ENCODE measurements at regions of chr6 and their contacts with region 1.

Region 1: DNA sequence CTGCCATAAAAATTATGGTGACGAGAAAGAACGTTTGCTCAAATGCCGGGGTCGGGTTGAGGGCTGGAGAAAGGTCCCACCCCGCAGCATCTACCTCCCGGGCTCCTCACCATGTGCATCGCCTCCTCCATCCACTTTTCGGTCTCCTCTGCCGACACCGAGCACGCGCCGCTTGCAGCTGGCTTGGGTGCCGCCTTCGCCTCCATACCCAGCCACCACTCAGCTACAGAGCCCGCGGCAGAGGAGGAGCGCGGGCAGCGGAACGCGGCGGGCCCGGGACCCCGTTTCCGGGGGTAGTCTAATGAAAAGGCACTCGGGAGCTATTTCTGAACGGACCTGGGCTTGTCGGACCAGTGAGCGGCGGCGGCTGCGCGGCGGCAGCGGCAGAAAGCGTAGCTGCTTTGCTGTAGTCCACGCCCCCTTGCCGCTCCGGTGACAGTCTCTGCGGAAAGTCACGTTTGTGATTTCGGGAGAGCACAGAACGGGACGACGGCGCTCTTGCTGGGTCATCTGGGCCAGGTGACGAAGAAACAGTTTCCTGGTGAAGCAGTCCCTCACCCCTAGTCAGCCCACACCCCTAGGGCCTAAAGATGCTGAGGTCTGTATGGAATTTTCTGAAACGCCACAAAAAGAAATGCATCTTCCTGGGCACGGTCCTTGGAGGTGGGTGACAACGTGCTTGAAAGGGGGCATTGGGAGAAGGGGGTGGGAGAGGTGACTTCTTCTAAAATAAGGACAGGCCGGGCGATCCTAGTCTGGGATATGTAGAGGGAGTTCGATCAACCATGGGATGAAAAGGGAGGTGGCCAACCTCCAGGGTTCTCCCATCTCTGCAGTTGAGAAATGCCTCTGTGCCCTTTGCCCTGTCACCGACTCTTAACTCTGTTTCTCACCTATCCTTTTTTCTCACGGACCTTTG is at the starts of genes ADAT2 and PEX3:
- DNase-seq: peak; percentile 76
- ATAC-seq: peak; percentile 96
- H3K4me3 ChIP-seq: peak within 1 kb of the TSS; percentile 79
- H3K27ac ChIP-seq: peak within 1 kb of the TSS; percentile 88
- H3K4me1 ChIP-seq: no peaks in the 10 kb centered on the region; the same call in 1 of the 2 replicates
- H3K27me3 ChIP-seq: no peaks in the 10 kb centered on the region
- CTCF ChIP-seq: no peak
- EP300 ChIP-seq: no peak
- POLR2A ChIP-seq: peak; percentile 95
- RAD21 ChIP-seq: 0 out of 2 replicates have a peak, but pooled peaks have one; percentile 21
- polyA plus RNA-seq, gene ADAT2: 7.8 to 9.0 TPM
- polyA plus RNA-seq, gene PEX3: 50.8 to 70.0 TPM

Region 2: GRCh38 chr6:142796571-142796970 is 654.1 kb before region 1 on chr6:
- CTCF ChIA-PET with region 1: no interaction called
- POLR2A ChIA-PET with region 1: interaction called, 11 read pairs
- RAD21 ChIA-PET with region 1: no interaction called
- SMC1A ChIA-PET with region 1: no interaction called
- in situ Hi-C with region 1: no loop called
- intact Hi-C with region 1: no loop called
- DNase-seq: no peak
- ATAC-seq: no peak
- H3K4me3 ChIP-seq: no peak overlapping the region
- H3K27ac ChIP-seq: no peak overlapping the region
- H3K4me1 ChIP-seq: peaks cover 17% of the 10 kb centered on the region
- H3K27me3 ChIP-seq: no peaks in the 10 kb centered on the region
- CTCF ChIP-seq: no peak
- EP300 ChIP-seq: no peak
- POLR2A ChIP-seq: no peak
- RAD21 ChIP-seq: no peak

Region 3: DNA sequence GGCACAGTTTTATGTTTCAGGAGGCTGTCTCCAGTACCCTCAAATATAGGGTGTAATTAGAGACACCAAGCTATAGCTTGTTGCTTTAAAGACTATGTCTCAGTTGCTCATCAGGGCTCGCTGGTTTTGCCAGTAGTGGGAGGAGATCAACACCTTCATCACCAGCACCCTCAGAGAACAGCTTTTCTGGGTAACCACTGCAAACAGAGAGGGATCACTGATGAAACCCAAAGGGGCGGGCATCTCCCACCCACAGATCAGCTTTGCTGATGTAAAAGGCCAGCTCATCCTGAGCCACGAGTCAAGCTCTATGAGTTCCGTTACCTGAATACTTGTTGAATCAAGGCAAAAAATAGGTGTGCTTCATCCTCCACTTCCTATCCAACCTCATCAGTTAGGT is 202.4 kb before region 1 on chr6:
- CTCF ChIA-PET with region 1: no interaction called
- POLR2A ChIA-PET with region 1: no interaction called
- RAD21 ChIA-PET with region 1: no interaction called
- SMC1A ChIA-PET with region 1: no interaction called
- in situ Hi-C with region 1: no loop called
- intact Hi-C with region 1: no loop called
- DNase-seq: no peak
- ATAC-seq: no peak
- H3K4me3 ChIP-seq: no peak overlapping the region
- H3K27ac ChIP-seq: no peak overlapping the region
- H3K4me1 ChIP-seq: no peaks in the 10 kb centered on the region
- H3K27me3 ChIP-seq: no peaks in the 10 kb centered on the region
- CTCF ChIP-seq: no peak
- EP300 ChIP-seq: no peak
- POLR2A ChIP-seq: no peak
- RAD21 ChIP-seq: no peak

Region 4: GRCh38 chr6:143286251-143286795 is 164.4 kb before region 1 on chr6:
- CTCF ChIA-PET with region 1: no interaction called
- POLR2A ChIA-PET with region 1: no interaction called
- RAD21 ChIA-PET with region 1: no interaction called
- SMC1A ChIA-PET with region 1: no interaction called
- in situ Hi-C with region 1: no loop called
- intact Hi-C with region 1: no loop called
- DNase-seq: no peak
- ATAC-seq: no peak
- H3K4me3 ChIP-seq: no peak overlapping the region
- H3K27ac ChIP-seq: no peak overlapping the region
- H3K4me1 ChIP-seq: no peaks in the 10 kb centered on the region
- H3K27me3 ChIP-seq: no peaks in the 10 kb centered on the region; a peak in 1 of 4 replicates
- CTCF ChIP-seq: no peak
- EP300 ChIP-seq: no peak
- POLR2A ChIP-seq: no peak
- RAD21 ChIP-seq: no peak

Region 5: DNA sequence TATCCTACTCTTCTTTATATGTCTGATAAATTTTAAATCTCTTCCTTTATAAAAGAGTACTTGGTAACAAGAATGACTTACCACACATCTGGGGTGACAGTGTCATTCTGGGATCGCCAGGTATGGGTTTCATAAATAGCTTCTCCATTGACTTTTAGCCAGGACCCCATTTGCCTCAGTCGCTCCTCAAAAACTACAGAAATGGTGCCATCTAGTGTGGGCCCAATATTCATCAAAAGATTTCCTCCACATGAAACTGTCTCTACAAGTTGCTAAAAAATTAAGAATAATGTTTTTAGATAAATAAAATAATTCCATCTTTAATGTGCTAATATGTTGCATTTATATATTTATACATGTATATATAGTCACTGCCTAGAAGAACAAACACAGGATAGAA is 51.1 kb after region 1 on chr6:
- CTCF ChIA-PET with region 1: interaction called, 4 read pairs
- POLR2A ChIA-PET with region 1: no interaction called
- RAD21 ChIA-PET with region 1: interaction called, 4 read pairs
- SMC1A ChIA-PET with region 1: interaction called, 4 read pairs
- in situ Hi-C with region 1: no loop called
- intact Hi-C with region 1: loop called (anchors 1 kb)
- DNase-seq: no peak
- ATAC-seq: no peak
- H3K4me3 ChIP-seq: no peak overlapping the region
- H3K27ac ChIP-seq: no peak overlapping the region
- H3K4me1 ChIP-seq: peaks cover 12% of the 10 kb centered on the region
- H3K27me3 ChIP-seq: no peaks in the 10 kb centered on the region
- CTCF ChIP-seq: no peak
- EP300 ChIP-seq: no peak
- POLR2A ChIP-seq: no peak
- RAD21 ChIP-seq: no peak

Region 6: GRCh38 chr6:143569040-143569439 is 118.3 kb after region 1 on chr6:
- CTCF ChIA-PET with region 1: interaction called, 3 read pairs
- POLR2A ChIA-PET with region 1: no interaction called
- RAD21 ChIA-PET with region 1: no interaction called
- SMC1A ChIA-PET with region 1: no interaction called
- in situ Hi-C with region 1: no loop called
- intact Hi-C with region 1: loop called (anchors 1 kb)
- DNase-seq: no peak
- ATAC-seq: no peak
- H3K4me3 ChIP-seq: no peak overlapping the region
- H3K27ac ChIP-seq: no peak overlapping the region
- H3K4me1 ChIP-seq: peaks cover 4% of the 10 kb centered on the region
- H3K27me3 ChIP-seq: no peaks in the 10 kb centered on the region; a peak in 2 of 4 replicates
- CTCF ChIP-seq: no peak
- EP300 ChIP-seq: no peak
- POLR2A ChIP-seq: no peak
- RAD21 ChIP-seq: no peak

Region 7: GRCh38 chr6:143772116-143773086 is 321.7 kb after region 1 on chr6:
- CTCF ChIA-PET with region 1: no interaction called
- POLR2A ChIA-PET with region 1: no interaction called
- RAD21 ChIA-PET with region 1: no interaction called
- SMC1A ChIA-PET with region 1: no interaction called
- in situ Hi-C with region 1: no loop called
- intact Hi-C with region 1: no loop called
- DNase-seq: no peak
- ATAC-seq: no peak
- H3K4me3 ChIP-seq: no peak overlapping the region
- H3K27ac ChIP-seq: no peak overlapping the region
- H3K4me1 ChIP-seq: no peaks in the 10 kb centered on the region
- H3K27me3 ChIP-seq: no peaks in the 10 kb centered on the region
- CTCF ChIP-seq: no peak
- EP300 ChIP-seq: no peak
- POLR2A ChIP-seq: no peak
- RAD21 ChIP-seq: no peak

Region 8: DNA sequence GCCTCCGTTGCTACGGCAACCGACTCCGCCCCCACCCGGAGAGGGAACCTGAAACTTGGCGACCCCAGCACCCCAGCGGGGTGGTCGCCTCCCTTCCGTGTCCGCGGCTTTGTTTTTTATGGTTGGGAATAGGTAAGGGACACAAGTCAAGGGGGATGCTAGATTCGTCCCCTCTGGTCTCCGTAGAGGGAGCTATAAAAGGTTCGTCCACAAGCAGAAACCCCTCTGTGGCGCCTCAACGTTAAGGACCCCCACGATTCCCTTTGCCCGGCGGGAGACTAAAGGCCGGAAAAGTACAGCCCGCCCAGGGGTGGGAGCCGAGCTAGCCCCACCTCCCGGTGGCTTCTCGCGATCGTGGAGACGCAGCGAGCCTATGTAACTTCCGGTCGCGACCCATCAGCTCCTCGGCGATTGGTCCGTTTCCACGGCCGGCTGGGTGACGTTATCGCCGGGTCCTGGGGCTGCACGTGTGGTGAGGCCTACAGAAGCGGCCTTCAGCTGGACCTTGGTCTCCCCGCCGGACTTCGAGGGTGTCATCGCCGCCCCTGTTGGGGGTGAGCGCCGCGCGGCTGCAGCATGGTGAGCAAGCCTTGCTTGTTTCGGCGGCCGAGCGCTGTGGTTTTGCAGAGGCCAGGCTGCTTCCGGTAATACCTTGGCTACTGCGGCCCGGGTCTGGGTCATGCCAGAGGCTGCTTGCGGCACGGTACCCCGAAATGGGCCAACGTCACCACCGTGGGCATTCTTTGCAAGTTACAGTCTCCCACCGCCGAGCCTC is 392.4 kb after region 1 on chr6 and contains the start of gene LTV1:
- CTCF ChIA-PET with region 1: interaction called, 3 read pairs
- POLR2A ChIA-PET with region 1: no interaction called
- RAD21 ChIA-PET with region 1: no interaction called
- SMC1A ChIA-PET with region 1: no interaction called
- in situ Hi-C with region 1: no loop called
- intact Hi-C with region 1: loop called (anchors 5 kb)
- DNase-seq: peak; percentile 81
- ATAC-seq: peak; percentile 99
- H3K4me3 ChIP-seq: peak within 1 kb of the TSS; percentile 88
- H3K27ac ChIP-seq: peak within 1 kb of the TSS; percentile 78
- H3K4me1 ChIP-seq: no peaks in the 10 kb centered on the region
- H3K27me3 ChIP-seq: no peaks in the 10 kb centered on the region
- CTCF ChIP-seq: no peak
- EP300 ChIP-seq: no peak
- POLR2A ChIP-seq: peak; percentile 85
- RAD21 ChIP-seq: no peak
- polyA plus RNA-seq, gene LTV1: 33.9 to 57.9 TPM

Region 9: DNA sequence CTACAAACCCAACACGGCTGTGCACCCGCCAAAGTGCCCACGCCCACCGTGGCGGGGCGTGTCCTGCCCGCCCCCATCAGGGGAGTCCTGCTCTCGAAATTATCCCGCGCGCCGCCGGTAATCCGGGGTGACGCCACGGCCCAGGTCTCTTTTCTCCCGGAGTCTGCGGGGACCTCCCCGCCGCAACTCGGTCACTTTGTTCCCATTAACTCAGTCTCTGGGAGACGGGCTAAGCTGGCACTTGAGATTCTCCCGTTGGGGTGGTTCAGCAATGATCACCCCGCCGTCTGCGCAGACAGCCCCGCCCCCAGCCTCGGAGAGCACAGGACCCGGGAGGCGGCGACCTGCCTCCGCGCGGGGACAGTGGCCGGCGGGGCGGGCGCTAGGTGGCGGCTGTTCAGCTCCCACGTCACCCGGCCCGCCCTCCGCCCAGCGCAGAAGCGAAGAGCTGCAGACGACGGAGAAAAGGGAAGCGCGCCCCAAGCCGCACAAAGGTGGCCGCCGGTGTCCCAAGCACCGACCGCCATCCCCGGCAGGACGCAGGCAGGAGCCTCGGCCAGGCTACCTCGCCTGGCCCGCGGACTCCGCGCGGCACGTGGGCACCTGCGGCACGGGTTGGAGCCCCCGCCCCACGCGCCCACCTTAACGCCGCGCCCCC is 613.2 kb after region 1 on chr6:
- CTCF ChIA-PET with region 1: no interaction called
- POLR2A ChIA-PET with region 1: no interaction called
- RAD21 ChIA-PET with region 1: no interaction called
- SMC1A ChIA-PET with region 1: no interaction called
- in situ Hi-C with region 1: no loop called
- intact Hi-C with region 1: loop called (anchors 5 kb)
- DNase-seq: peak; percentile 59
- ATAC-seq: peak; percentile 90
- H3K4me3 ChIP-seq: peak overlapping the region; percentile 85
- H3K27ac ChIP-seq: peak overlapping the region; percentile 94
- H3K4me1 ChIP-seq: peaks cover 10% of the 10 kb centered on the region
- H3K27me3 ChIP-seq: no peaks in the 10 kb centered on the region
- CTCF ChIP-seq: peak; percentile 13 to 41 (median 16); a peak in 3 of 6 replicates
- EP300 ChIP-seq: no peak
- POLR2A ChIP-seq: peak; percentile 97
- RAD21 ChIP-seq: no peak